ENCODE measurements at regions of chr9 and their contacts with region 1.

Region 1: DNA sequence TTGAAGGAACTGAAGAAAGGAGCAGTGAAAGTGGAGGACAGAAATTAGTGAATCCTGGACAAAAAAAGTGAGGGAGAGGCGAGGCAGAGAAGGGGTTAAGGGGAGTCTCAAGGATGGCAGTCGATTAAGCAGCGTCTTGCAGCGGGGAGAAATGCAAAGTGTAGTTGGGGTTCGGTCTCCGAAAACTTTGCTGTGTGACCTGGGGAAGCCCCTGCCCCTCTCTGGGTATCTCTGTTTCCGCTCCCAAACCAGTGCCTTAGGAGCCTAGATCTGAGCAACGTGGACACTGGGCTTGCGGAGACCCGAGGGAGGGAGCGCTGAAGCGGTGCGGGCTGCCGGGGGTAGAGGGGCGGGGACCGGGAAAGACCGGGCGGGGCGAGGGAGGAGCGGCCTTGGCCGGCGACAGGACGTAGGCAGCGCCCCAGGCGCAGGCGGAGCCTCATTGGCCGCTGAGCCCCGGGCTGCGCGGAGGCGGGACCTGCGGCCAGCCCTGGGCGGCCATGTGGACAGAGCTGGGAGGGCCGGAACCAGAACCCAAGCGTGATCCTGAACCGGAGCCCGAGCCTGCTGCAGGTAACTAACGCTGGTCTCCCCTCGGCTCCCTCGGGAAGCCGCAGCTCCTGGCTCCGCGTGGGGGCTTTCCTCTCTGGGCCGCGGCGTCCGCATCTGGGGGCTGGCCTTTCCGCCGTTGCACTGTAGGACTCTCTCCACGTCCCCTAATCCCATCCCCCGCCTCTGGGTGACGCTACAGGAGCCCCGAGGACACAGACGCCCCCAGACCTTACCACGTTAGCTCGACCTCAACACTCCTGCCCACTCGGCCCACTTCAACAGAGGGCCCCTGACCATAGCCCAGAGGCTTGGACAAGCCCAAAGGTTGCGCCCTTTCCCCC is at the start of gene ALDH1B1:
- DNase-seq: peak; percentile 81

Region 2: GRCh38 chr9:37511016-37512010 is 881.2 kb before region 1 on chr9:
- in situ Hi-C with region 1: loop called (anchors 25 kb)
- DNase-seq: no peak

Region 3: GRCh38 chr9:37746848-37747753 is 645.4 kb before region 1 on chr9:
- in situ Hi-C with region 1: loop called (anchors 25 kb)
- DNase-seq: peak; percentile 68

Region 4: DNA sequence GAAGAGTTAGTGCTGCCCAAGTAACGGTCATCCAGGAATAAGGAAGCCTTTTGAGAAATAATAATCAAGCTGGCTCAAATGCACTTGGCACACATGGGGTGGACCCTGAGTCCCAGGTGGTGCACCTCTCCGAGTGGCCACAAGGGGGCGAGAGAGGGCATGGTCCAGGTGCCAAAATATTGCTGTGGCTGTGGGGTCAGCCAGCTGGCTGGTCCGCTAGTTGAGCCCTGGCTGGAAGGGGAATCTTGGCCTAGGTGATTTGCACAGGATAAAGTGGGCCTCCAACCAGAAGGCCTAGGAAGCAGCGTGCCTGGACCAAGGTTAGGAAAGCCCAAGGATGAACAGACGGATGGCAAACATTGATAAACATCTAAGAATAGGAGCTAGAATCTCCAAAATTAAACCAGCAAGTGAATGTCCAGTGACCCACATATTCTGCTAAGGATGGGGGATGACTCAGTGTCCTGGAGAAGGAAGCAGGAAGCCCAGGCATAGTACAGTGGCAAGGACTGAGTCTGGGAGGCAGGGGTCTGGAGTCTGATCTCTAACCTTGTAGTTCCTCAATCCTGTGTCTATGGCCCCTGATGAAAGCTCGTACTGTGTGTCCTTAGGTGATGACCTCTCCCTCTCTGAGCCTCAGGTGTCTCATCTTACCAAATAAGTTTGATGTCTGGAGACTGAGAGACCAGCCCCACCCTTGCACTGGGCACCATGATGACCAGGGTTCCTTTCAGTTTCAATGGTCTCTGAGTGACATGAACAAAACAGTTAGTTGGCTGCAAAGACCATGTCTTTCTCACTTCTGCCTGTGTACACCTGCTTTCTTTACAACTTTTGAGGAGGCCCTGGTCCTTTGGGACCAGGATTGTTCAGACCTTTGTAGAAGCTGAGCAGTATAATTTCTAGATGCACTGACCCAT is 304.2 kb before region 1 on chr9:
- in situ Hi-C with region 1: loop called (anchors 25 kb)
- DNase-seq: peak; percentile 54

Region 5: DNA sequence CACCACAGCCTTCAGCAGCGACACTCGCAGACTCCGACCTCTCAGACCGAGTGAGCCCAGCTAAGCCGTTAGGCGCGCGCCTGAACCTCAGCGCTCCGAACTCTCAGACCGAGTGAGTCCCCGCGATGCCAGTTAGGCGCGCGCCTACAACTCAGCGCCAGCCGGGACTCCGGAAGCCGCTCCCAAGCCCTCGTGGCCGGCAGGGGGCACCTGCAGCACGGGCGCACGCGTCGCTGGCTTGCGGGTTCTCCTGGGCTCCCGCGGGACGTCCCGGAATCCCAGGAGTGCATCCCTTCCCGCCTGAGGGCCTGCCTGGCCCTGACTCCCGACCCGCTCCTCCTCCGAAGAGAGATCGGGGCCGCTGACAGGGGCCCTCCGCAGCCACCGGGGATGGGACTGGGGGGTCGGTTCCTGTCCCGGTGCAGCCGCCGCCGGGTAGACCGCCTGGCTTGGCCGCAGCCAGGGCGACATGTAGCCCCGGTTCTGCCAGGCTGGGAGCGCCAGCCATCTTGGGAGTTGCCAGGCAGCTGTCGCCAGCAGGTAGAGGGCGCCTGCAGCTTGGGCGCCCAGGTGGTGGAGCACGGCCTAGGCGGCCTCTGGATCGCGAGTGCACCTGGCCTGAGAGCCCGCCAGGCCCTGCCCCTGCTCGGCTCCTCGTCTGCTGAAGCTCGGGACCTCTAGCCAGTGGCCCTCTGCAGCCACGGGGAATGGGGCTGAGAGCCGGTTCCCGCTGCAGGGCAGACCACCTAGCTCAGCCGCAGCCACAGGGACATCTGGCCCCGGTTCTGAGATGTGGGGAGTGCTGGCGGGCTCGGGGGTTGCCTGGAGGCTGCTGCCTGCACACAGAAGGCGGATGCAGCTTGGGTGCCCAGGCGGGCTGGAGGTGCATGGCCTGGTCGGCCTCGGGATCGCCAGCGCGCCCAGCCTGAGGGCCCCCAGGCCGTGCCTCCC is 228.3 kb after region 1 on chr9 and contains the start of gene ANKRD18A:
- in situ Hi-C with region 1: no loop called
- DNase-seq: peak; percentile 63

Measured in KBM-7 (cell line).